Activated CD4-positive, alpha-beta T cell treated with anti-CD3 and anti-CD28 coated beads for 36 hours (primary cell): ENCODE measurements at regions of chr20 and their contacts with region 1.

Region 1: GRCh38 chr20:1325173-1326030 is 3.5 kb downstream of the SDCBP2 start:
- DNase-seq: peak; percentile 99
- ATAC-seq: peak; percentile 83
- H3K4me3 Mint-ChIP-seq: no peak overlapping the region
- H3K27ac Mint-ChIP-seq: no peak overlapping the region
- H3K4me1 Mint-ChIP-seq: peaks cover 28% of the 10 kb centered on the region
- H3K27me3 Mint-ChIP-seq: no peaks in the 10 kb centered on the region

Region 2: DNA sequence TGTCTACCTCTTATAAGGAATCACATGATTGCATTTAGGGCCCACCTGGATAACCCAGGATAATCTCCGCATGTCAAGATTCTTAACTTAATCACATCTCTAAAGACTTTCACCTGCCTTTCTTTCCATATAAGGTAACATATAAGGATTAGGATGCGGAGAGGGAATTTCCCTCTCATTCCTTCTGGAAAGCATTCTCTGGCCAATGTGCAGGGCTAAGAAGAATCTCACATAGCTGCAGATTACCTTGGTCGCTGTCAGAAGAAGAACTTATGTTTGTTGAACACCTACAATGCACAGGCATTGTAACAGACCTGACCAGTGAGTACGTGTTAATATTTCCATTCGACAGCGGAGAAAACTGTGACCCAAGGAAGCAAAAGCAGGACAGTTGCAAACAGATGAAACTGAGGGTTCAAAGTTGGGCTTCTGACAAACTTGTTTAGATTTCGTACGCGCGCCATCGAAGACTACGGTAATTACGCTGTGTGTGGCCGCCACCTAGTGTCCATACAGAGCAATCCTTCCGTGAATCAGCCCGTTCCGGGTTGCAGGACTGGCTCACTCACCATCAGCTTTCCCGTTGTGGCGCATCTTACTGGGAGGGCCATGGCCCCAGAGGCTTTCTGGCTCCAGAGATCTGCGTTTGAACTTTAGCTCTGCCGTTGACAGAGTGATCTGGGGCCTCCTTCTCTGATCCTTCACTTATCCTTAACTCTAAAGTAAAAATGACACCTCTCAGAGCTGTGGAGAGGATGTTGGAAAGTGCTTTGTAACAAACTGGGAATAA is 112.6 kb before region 1 on chr20:
- CTCF ChIA-PET with region 1: no interaction called
- POLR2A ChIA-PET with region 1: no interaction called
- intact Hi-C with region 1: loop called in 1 of 2 experiments (anchors 1 kb)
- DNase-seq: peak; percentile 86
- ATAC-seq: peak; percentile 66
- H3K4me3 Mint-ChIP-seq: no peak overlapping the region
- H3K27ac Mint-ChIP-seq: no peak overlapping the region
- H3K4me1 Mint-ChIP-seq: peaks cover 36% of the 10 kb centered on the region
- H3K27me3 Mint-ChIP-seq: peaks cover 3% of the 10 kb centered on the region

Region 3: DNA sequence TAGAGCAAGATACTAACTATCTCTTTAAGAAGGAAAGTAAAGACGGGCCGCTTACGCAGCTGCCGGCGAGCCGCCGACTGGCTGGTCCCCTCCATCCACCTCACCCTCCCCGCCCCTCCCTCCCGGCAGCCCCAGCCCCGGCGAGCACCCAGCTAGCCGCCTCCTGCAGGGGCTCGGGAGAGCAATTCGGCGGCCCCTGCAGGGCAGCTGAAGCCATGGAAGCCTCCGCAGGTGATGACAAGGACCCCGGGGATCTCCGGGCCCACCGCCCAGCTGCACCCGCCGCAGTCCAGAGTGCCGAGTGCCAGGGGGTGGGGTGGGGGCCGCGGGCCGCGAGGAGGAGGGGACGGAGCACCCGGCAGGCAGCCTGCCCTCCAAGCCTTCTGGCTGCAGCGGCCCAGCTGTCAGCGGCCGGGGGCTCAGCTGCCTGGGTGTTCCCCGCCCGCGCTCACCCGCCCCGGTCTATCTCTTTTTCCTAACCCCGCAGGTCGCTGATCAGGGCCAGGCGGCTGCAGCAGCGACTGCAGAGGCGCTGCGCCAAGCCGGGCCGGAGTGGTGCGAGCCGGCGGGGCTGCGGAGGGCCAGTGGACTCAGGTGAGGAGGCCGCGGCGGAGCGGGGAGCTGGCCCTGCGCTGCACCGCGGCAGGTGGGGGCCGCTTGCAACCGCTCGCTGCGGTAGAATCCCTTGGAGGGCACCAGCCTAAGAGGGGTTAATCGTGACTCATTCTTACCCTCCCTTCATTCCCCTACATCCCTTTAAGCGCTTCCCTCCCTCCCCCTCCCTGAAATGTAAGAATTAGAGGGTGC is 59.0 kb before region 1 on chr20 and contains the start of gene SNPH:
- CTCF ChIA-PET with region 1: no interaction called
- POLR2A ChIA-PET with region 1: interaction called, 3 read pairs
- intact Hi-C with region 1: loop called in 1 of 2 experiments (anchors 1 kb)
- DNase-seq: peak; percentile 86
- ATAC-seq: peak; percentile 91
- H3K4me3 Mint-ChIP-seq: peak within 1 kb of the TSS; percentile 78
- H3K27ac Mint-ChIP-seq: peak within 1 kb of the TSS; percentile 66
- H3K4me1 Mint-ChIP-seq: peaks cover 46% of the 10 kb centered on the region
- H3K27me3 Mint-ChIP-seq: no peaks in the 10 kb centered on the region
- total RNA-seq, gene SNPH: 2.5 to 2.9 TPM

Region 4: DNA sequence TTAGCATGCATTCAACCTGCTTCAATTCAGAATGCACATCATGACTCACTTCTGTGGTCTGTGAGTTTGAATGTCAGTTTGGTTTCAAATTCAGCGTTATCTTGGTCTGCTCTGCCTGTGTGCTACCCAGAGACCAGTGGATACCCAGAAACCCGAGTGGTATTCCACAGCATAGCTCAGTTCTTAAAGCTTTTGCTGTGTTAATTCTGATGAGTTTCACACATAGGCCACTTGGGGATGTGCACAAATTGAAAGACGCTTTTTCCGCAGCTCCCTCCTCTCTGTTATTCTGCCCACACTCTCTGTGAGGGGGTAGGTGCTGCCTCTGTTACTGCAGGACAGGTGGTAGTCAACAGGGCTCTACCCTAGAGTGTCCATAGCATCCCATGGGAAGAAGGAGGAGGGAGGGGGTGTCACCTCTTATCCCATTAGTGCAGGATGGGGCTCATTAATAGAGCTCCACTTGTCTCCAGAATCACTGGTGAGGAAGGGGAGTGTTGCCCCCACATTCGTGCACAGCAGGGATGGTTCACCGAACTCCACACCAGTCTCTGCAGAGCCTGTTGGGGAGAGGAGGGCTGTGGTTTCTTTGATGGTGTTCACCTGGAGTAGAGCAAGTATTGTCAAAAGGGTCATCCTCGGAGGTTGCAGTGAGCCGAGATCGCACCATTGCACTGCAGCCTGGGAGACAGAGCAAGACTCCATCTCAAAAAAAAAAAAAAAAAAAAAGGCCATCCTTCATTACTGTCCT is 32.7 kb after region 1 on chr20:
- CTCF ChIA-PET with region 1: interaction called, 7 read pairs
- POLR2A ChIA-PET with region 1: interaction called, 4 read pairs
- intact Hi-C with region 1: loop called (anchors 1 to 2 kb)
- DNase-seq: peak; percentile 49
- ATAC-seq: peak; percentile 93
- H3K4me3 Mint-ChIP-seq: peak overlapping the region; percentile 54
- H3K27ac Mint-ChIP-seq: peak overlapping the region; percentile 70
- H3K4me1 Mint-ChIP-seq: peaks cover 56% of the 10 kb centered on the region
- H3K27me3 Mint-ChIP-seq: no peaks in the 10 kb centered on the region

Region 5: GRCh38 chr20:1392823-1393506 is 67.6 kb after region 1 on chr20 and contains the start of gene FKBP1A:
- CTCF ChIA-PET with region 1: interaction called, 5 read pairs
- POLR2A ChIA-PET with region 1: interaction called, 15 read pairs
- intact Hi-C with region 1: loop called (anchors 1 kb)
- DNase-seq: peak; percentile 95
- ATAC-seq: peak; percentile 82
- H3K4me3 Mint-ChIP-seq: peak within 1 kb of the TSS; percentile 93
- H3K27ac Mint-ChIP-seq: peak within 1 kb of the TSS; percentile 94
- H3K4me1 Mint-ChIP-seq: peaks cover 56% of the 10 kb centered on the region
- H3K27me3 Mint-ChIP-seq: no peaks in the 10 kb centered on the region
- total RNA-seq, gene FKBP1A: 265 to 316 TPM

Region 6: GRCh38 chr20:1625083-1625690 is 299.8 kb after region 1 on chr20:
- CTCF ChIA-PET with region 1: no interaction called
- POLR2A ChIA-PET with region 1: no interaction called
- intact Hi-C with region 1: loop called in 1 of 2 experiments (anchors 1 kb)
- DNase-seq: no peak
- ATAC-seq: peak; percentile 71
- H3K4me3 Mint-ChIP-seq: peak overlapping the region; percentile 8
- H3K27ac Mint-ChIP-seq: peak overlapping the region; percentile 72
- H3K4me1 Mint-ChIP-seq: peaks cover 86% of the 10 kb centered on the region
- H3K27me3 Mint-ChIP-seq: no peaks in the 10 kb centered on the region

Region 7: GRCh38 chr20:1741309-1742048 is 416.1 kb after region 1 on chr20:
- CTCF ChIA-PET with region 1: no interaction called
- POLR2A ChIA-PET with region 1: no interaction called
- intact Hi-C with region 1: no loop called
- DNase-seq: no peak
- ATAC-seq: no peak
- H3K4me3 Mint-ChIP-seq: no peak overlapping the region
- H3K27ac Mint-ChIP-seq: no peak overlapping the region
- H3K4me1 Mint-ChIP-seq: peaks cover 2% of the 10 kb centered on the region
- H3K27me3 Mint-ChIP-seq: peaks cover 6% of the 10 kb centered on the region

Region 8: DNA sequence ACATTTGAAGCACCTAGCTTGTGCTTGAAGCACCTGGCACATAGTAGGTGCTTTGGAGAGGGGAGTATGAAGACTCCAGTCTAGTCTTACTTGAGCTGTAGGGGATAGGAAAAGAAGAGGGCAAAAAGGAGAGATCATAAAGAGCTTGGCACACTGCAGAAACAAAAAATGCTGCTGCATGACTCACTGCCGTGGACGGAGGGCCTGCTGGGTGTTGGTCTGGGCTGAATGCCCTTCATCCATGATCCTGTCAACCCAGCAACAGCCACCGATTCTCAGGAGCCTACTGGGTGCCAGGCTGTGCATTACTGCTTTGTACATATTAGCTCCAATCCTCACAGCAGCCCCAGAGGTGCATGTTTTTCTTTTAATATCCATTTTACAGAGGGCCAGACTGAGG is 662.4 kb after region 1 on chr20:
- CTCF ChIA-PET with region 1: no interaction called
- POLR2A ChIA-PET with region 1: no interaction called
- intact Hi-C with region 1: no loop called
- DNase-seq: no peak
- ATAC-seq: no peak
- H3K4me3 Mint-ChIP-seq: no peak overlapping the region
- H3K27ac Mint-ChIP-seq: no peak overlapping the region
- H3K4me1 Mint-ChIP-seq: no peaks in the 10 kb centered on the region
- H3K27me3 Mint-ChIP-seq: peaks cover 27% of the 10 kb centered on the region

Region 9: GRCh38 chr20:2470423-2471193 is 1145.2 kb after region 1 on chr20 and contains the start of gene SNRPB:
- CTCF ChIA-PET with region 1: no interaction called
- POLR2A ChIA-PET with region 1: no interaction called
- intact Hi-C with region 1: no loop called
- DNase-seq: peak; percentile 98
- ATAC-seq: peak; percentile 99
- H3K4me3 Mint-ChIP-seq: peak within 1 kb of the TSS; percentile 96
- H3K27ac Mint-ChIP-seq: peak within 1 kb of the TSS; percentile 100
- H3K4me1 Mint-ChIP-seq: peaks cover 49% of the 10 kb centered on the region
- H3K27me3 Mint-ChIP-seq: no peaks in the 10 kb centered on the region
- total RNA-seq, gene SNRPB: 348 to 466 TPM